Sigmoid colon (tissue), 7 donors: ENCODE measurements at regions of chr16 and their contacts with region 1.

Region 1: DNA sequence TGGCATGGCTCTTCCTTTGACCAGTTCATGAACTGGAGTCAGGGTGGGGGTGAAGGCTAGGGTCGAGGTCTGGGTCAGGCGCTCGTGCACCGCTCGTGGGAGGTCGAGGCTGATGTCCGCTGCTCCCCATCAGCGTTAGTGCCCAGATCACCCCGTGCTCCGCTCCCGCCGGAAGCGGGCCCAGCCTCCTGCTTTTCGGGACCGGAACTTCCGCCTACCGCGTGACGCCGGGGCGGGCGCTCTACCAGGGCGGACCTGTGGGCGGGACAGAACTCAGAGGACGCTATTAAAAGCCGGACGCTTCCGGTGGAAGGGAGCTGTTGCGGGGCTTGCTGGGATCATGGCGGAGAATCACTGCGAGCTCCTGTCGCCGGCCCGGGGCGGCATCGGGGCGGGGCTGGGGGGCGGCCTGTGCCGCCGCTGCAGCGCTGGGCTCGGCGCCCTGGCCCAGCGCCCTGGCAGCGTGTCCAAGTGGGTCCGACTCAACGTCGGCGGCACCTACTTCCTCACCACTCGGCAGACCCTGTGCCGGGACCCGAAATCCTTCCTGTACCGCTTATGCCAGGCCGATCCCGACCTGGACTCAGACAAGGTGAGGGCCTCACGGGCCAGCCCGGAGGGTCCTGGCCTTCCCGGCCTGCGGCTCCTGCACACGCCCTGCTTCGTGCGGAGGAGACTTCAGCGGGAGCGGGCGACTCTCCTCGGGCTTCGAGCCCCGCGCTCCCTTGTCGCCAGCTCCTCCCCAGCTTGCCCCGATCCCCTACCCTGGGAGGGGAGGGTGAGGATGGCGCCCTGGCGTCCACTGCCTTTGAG is at the start of gene KCTD5:
- DNase-seq: peak; percentile 98
- H3K4me3 ChIP-seq: peak within 1 kb of the TSS; percentile 80 to 100 (median 96)
- H3K27ac ChIP-seq: peak within 1 kb of the TSS; percentile 84 to 94 (median 87)
- H3K4me1 ChIP-seq: peaks cover 4 to 30% (median 21%) of the 10 kb centered on the region in 4 donors
- H3K27me3 ChIP-seq: no peaks in the 10 kb centered on the region
- CTCF ChIP-seq: no peak
- EP300 ChIP-seq: no peak
- POLR2A ChIP-seq: peak; percentile 79 to 94
- total RNA-seq, gene KCTD5: 9.5 to 17.1 (median 11.5) TPM

Region 2: GRCh38 chr16:2720719-2721633 is 38.6 kb after region 1 on chr16:
- intact Hi-C with region 1: loop called (anchors 2 kb)
- DNase-seq: peak; percentile 92
- H3K4me3 ChIP-seq: peak overlapping the region; percentile 53 to 64 (median 61)
- H3K27ac ChIP-seq: peak overlapping the region; percentile 66 to 79 (median 76)
- H3K4me1 ChIP-seq: peaks cover 0 to 16% (median 12%) of the 10 kb centered on the region in 4 donors
- H3K27me3 ChIP-seq: peaks cover 0 to 17% (median 0%) of the 10 kb centered on the region in 3 donors
- CTCF ChIP-seq: peak in 2 of 4 experiments; percentile 22 to 88
- EP300 ChIP-seq: no peak
- POLR2A ChIP-seq: no peak

Region 3: GRCh38 chr16:2867987-2868789 is 185.8 kb after region 1 on chr16:
- intact Hi-C with region 1: loop called (anchors 5 kb)
- DNase-seq: peak; percentile 97
- H3K4me3 ChIP-seq: peak overlapping the region; percentile 56 to 69 (median 61)
- H3K27ac ChIP-seq: peak overlapping the region; percentile 84 to 91 (median 90)
- H3K4me1 ChIP-seq: peaks cover 0 to 6% (median 4%) of the 10 kb centered on the region in 4 donors
- H3K27me3 ChIP-seq: no peaks in the 10 kb centered on the region
- CTCF ChIP-seq: peak; percentile 90 to 97 (median 95)
- EP300 ChIP-seq: peak in 1 of 4 donors; percentile 7
- POLR2A ChIP-seq: peak; percentile 41 to 55